Sciatic nerve (tissue), 2 donors: ENCODE measurements at regions of chr4 and their contacts with region 1.

Region 1: GRCh38 chr4:169485791-169486742 is 126.3 kb downstream of the NEK1 start:
- DNase-seq: no peak
- ATAC-seq: no peak

Region 2: DNA sequence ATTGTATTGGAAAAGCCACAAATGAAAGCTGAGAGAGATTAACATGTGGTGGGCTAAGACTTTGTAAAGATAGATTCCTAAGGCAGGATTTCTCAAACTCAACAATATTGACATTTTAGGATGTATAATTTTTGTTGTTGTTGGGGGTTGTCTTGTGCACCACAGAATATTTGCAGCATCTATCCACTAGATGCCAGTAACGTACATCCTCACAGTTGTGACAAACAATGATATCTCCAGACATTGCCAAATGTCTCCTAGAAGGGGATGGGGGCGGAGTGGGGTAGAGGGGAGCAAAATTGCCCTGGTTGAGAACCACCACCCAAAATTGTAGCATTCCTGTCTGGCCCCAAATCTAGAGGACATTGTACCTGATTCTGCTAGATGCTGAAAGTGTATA is 461.3 kb before region 1 on chr4:
- intact Hi-C with region 1: loop called (anchors 10 kb)
- DNase-seq: no peak
- ATAC-seq: peak; percentile 88